ENCODE measurements at regions of chr2 and their contacts with region 1.

Region 1: GRCh38 chr2:206159346-206160124 is at the starts of genes EEF1B2 and NDUFS1:
- DNase-seq: peak; percentile 88 to 97 (median 96)
- ATAC-seq: peak; percentile 94
- H3K4me3 ChIP-seq: peak within 1 kb of the TSS; percentile 95
- H3K4me3 Mint-ChIP-seq: peak within 1 kb of the TSS; percentile 95 to 100 (median 98)
- H3K27ac ChIP-seq: peak within 1 kb of the TSS; percentile 96
- H3K27ac Mint-ChIP-seq: peak within 1 kb of the TSS; percentile 97 to 99 (median 99)
- H3K4me1 ChIP-seq: peaks cover 19 to 29% of the 10 kb centered on the region in 2 donors
- H3K4me1 Mint-ChIP-seq: peaks cover 36 to 78% (median 62%) of the 10 kb centered on the region in 7 donors
- H3K27me3 ChIP-seq: no peaks in the 10 kb centered on the region
- H3K27me3 Mint-ChIP-seq: no peaks in the 10 kb centered on the region
- total RNA-seq, gene EEF1B2: 542 to 1,236 (median 1,148) TPM
- total RNA-seq, gene NDUFS1: 37.3 to 61.9 (median 56.3) TPM

Region 2: GRCh38 chr2:206085742-206086445 is 73.6 kb before region 1 on chr2 and contains the start of gene INO80D:
- CTCF ChIA-PET with region 1: interaction called, 4 read pairs
- POLR2A ChIA-PET with region 1: interaction called, 16 read pairs
- intact Hi-C with region 1: loop called (anchors 1 kb)
- DNase-seq: peak; percentile 71 to 92 (median 90)
- ATAC-seq: peak; percentile 95
- H3K4me3 ChIP-seq: peak within 1 kb of the TSS; percentile 97
- H3K4me3 Mint-ChIP-seq: peak within 1 kb of the TSS; percentile 96 to 99 (median 98)
- H3K27ac ChIP-seq: peak within 1 kb of the TSS; percentile 97
- H3K27ac Mint-ChIP-seq: peak within 1 kb of the TSS; percentile 98 to 100 (median 100)
- H3K4me1 ChIP-seq: peaks cover 0 to 9% of the 10 kb centered on the region in 2 donors
- H3K4me1 Mint-ChIP-seq: peaks cover 25 to 61% (median 47%) of the 10 kb centered on the region in 7 donors
- H3K27me3 ChIP-seq: no peaks in the 10 kb centered on the region
- H3K27me3 Mint-ChIP-seq: no peaks in the 10 kb centered on the region
- total RNA-seq, gene INO80D: 30.7 to 50.9 (median 43.4) TPM

Region 3: DNA sequence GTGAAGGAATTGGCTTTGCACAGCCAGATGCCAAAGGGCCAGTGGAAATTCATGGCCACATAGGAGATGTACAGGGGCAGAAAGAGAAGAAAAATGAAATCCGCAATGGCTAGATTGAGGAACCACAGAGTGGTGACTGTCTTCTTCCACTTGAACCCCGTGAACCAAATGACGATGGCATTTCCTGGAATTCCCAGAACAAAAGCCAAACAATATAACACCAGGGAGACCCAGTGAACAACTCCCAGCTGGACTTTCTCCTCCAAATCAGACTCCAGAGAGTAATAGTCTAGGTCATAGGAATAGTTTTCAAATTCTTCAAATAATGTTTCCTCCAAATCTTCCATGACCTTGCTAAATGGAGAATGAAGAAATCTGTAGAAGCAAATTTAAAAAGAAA is 17.4 kb after region 1 on chr2:
- CTCF ChIA-PET with region 1: no interaction called
- POLR2A ChIA-PET with region 1: no interaction called
- intact Hi-C with region 1: no loop called
- DNase-seq: no peak
- ATAC-seq: no peak
- H3K4me3 ChIP-seq: no peak overlapping the region
- H3K4me3 Mint-ChIP-seq: no peak overlapping the region
- H3K27ac ChIP-seq: no peak overlapping the region
- H3K27ac Mint-ChIP-seq: no peak overlapping the region
- H3K4me1 ChIP-seq: no peaks in the 10 kb centered on the region
- H3K4me1 Mint-ChIP-seq: no peaks in the 10 kb centered on the region
- H3K27me3 ChIP-seq: no peaks in the 10 kb centered on the region
- H3K27me3 Mint-ChIP-seq: peaks cover 0 to 7% (median 5%) of the 10 kb centered on the region in 5 donors

Region 4: DNA sequence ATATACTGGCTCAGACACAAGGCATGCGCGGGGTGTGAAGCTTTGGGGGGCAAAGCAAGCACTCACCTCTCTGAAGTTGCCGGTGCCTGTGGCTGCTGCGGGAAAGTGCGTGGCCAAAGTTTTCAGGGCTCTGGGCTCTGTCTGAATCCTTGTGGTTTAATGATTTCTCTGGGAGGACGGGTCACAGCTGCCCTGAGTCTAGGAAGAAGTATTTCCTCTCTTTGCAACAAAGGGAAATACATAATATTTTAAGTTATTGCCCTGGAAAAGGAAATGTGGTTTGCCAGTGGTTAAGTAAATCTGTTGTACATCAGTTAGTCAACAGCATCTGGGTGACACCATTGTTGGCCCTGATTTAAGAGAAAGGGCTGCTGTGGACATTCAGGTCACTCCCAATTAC is 58.2 kb after region 1 on chr2:
- CTCF ChIA-PET with region 1: no interaction called
- POLR2A ChIA-PET with region 1: no interaction called
- intact Hi-C with region 1: no loop called
- DNase-seq: no peak
- ATAC-seq: no peak
- H3K4me3 ChIP-seq: no peak overlapping the region
- H3K4me3 Mint-ChIP-seq: no peak overlapping the region
- H3K27ac ChIP-seq: no peak overlapping the region
- H3K27ac Mint-ChIP-seq: no peak overlapping the region
- H3K4me1 ChIP-seq: no peaks in the 10 kb centered on the region
- H3K4me1 Mint-ChIP-seq: peaks cover 0 to 6% (median 0%) of the 10 kb centered on the region in 7 donors
- H3K27me3 ChIP-seq: peaks cover 0 to 5% of the 10 kb centered on the region in 2 donors
- H3K27me3 Mint-ChIP-seq: peaks cover 36 to 49% (median 42%) of the 10 kb centered on the region in 5 donors

Region 5: GRCh38 chr2:206438196-206438727 is 278.7 kb after region 1 on chr2:
- CTCF ChIA-PET with region 1: interaction called, 3 read pairs
- POLR2A ChIA-PET with region 1: no interaction called
- intact Hi-C with region 1: loop called in 1 of 2 experiments (anchors 2 kb)
- DNase-seq: no peak
- ATAC-seq: no peak
- H3K4me3 ChIP-seq: no peak overlapping the region
- H3K4me3 Mint-ChIP-seq: no peak overlapping the region
- H3K27ac ChIP-seq: no peak overlapping the region
- H3K27ac Mint-ChIP-seq: no peak overlapping the region
- H3K4me1 ChIP-seq: peaks cover 4 to 8% of the 10 kb centered on the region in 2 donors
- H3K4me1 Mint-ChIP-seq: peaks cover 4 to 11% (median 9%) of the 10 kb centered on the region in 7 donors
- H3K27me3 ChIP-seq: peaks cover 3 to 5% of the 10 kb centered on the region in 2 donors
- H3K27me3 Mint-ChIP-seq: peaks cover 47 to 61% (median 54%) of the 10 kb centered on the region in 5 donors

Region 6: DNA sequence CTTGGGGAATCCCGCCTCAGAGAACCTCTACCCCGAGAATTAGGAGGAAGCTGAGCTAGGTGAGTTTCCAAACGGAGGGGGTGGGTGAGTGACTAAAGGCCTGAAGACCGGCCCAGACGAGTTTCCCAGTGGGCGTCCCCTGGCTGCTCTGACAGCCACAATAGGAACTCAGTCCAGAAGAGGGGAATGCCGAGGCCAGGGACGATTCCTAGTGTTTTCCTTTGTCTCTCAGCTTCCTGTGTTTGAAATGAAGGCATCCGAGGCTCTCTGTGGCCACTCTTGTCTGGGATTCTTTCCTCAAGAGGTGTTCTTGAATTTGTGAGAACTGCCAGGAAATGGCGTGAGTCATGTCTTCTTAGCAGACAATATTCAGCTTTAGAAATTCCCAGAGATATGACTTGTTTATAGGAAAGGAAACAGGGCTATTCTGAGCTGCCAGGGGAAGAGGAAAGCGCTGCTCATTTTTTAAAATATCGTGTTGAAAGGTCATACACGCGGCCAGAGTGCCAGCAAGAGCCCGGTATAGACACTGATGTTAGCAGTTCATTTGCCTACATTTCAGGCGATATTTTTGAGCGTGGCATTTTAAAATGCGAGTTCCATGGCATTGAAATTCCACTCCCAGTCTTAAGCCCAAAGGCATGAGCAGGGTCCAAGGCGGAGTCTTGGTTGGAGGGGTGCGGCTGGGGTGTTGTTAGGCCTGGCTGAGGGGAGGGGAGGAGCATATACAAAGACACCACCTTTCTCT is 1175.3 kb after region 1 on chr2:
- CTCF ChIA-PET with region 1: no interaction called
- POLR2A ChIA-PET with region 1: no interaction called
- intact Hi-C with region 1: loop called in 1 of 2 experiments (anchors 5 kb)
- DNase-seq: peak in 1 of 9 donors; percentile 57
- ATAC-seq: no peak
- H3K4me3 ChIP-seq: no peak overlapping the region
- H3K4me3 Mint-ChIP-seq: peak overlapping the region in 2 of 10 donors; percentile 20 to 59
- H3K27ac ChIP-seq: no peak overlapping the region
- H3K27ac Mint-ChIP-seq: peak overlapping the region in 1 of 9 donors; percentile 84
- H3K4me1 ChIP-seq: peaks cover 0 to 20% of the 10 kb centered on the region in 2 donors
- H3K4me1 Mint-ChIP-seq: peaks cover 9 to 75% (median 17%) of the 10 kb centered on the region in 7 donors
- H3K27me3 ChIP-seq: no peaks in the 10 kb centered on the region
- H3K27me3 Mint-ChIP-seq: no peaks in the 10 kb centered on the region

Region 7: DNA sequence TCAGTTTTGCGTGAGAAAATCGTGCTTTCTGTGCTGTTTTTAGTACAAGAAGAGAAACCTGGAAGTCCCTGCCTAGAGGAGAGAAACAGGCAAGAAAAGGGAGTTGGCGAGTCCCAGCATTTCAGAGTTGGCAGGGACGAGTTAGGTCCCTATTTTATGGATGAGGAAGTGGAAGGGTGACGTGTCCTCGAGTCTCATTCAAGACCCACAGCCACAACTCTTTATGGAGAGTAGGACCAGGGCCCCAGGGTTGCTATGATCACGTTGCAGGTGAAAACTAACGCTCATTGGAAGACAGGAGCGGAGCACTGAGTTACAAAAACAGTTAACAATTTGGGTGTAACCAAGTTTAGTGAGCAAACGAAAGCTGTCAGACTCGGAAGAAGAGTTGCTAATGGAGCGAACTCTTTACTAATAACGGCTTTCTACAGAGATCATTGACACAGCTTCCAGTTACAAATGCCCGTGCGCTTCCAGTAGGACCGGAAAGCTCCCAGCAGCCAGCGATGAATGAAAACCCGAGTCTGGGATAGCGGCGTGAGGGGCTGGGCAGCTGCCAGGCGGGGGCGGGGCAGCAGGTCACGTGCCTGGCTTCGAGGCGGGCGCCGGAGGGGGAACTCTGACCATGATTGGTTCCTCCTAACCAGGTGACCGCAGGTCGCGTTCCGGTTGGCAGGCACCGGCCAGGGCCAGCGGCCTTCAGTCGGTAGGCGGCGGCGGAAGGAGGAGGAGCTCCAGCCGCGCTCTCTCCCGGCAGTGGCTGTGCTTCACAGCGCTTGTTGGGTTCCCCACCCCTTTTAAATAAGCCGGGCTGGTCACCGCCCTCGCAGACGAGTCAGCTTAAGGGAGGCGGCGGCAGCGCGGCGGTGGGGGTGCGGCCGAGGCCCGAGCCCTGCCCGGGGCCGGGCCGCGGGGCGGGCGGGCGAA is 1551.5 kb after region 1 on chr2 and contains the start of gene CCNYL1:
- CTCF ChIA-PET with region 1: no interaction called
- POLR2A ChIA-PET with region 1: interaction called, 3 read pairs
- intact Hi-C with region 1: loop called in 1 of 2 experiments (anchors 1 kb)
- DNase-seq: peak; percentile 93 to 98 (median 97)
- ATAC-seq: peak; percentile 98
- H3K4me3 ChIP-seq: peak within 1 kb of the TSS; percentile 88
- H3K4me3 Mint-ChIP-seq: peak within 1 kb of the TSS; percentile 94 to 99 (median 97)
- H3K27ac ChIP-seq: peak within 1 kb of the TSS; percentile 83
- H3K27ac Mint-ChIP-seq: peak within 1 kb of the TSS; percentile 83 to 98 (median 93)
- H3K4me1 ChIP-seq: peaks cover 4 to 11% of the 10 kb centered on the region in 2 donors
- H3K4me1 Mint-ChIP-seq: peaks cover 15 to 32% (median 27%) of the 10 kb centered on the region in 7 donors
- H3K27me3 ChIP-seq: no peaks in the 10 kb centered on the region
- H3K27me3 Mint-ChIP-seq: peaks cover 0 to 3% (median 0%) of the 10 kb centered on the region in 5 donors
- total RNA-seq, gene CCNYL1: 6.7 to 16.7 (median 10.7) TPM

Measured in naive thymus-derived CD4-positive, alpha-beta T cell (primary cell).